AG04450 (cell line): ENCODE measurements at regions of chr13 and their contacts with region 1.

Region 1: DNA sequence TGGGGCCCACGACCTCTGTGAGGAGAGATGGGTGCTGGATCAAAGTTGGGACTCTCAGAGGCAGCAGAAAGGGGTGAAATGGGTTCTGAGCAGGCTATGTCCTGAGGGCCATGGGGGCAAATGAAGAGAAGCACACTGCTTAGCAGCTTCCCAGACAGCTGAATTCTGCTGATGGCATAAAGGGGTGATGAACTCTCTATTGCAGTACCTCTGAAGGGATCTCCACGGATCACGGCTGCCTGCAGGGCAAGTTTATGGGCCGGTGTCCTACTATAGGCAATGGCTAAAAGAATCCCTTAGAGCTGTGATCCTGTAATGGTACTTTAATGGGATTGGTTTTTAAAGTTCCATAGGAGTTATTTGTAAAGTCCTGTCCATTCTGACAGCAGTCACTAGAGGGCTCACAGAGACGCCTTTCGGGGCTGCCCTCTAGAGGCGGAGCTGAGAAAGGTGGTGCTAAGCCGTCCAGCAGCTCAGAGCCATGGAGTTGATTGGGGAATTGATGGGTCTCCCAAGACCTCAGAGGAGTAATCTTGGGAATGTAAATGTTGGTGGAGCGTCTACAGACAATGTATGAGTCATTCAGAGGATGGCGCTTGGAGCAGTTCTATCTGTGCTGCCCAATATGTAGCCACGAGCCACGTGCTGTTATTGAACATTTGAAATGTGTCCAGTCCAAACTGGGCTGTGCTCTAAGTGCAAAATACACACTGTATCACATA is 287.3 kb downstream of the COG6 start:
- DNase-seq: peak; percentile 33
- H3K4me3 ChIP-seq: no peak overlapping the region
- H3K27ac ChIP-seq: no peak overlapping the region
- H3K27me3 ChIP-seq: peaks cover 4% of the 10 kb centered on the region
- CTCF ChIP-seq: peak; percentile 100

Region 2: GRCh38 chr13:39684531-39685137 is 258.1 kb before region 1 on chr13:
- CTCF ChIA-PET with region 1: interaction called, 24 read pairs
- POLR2A ChIA-PET with region 1: no interaction called
- DNase-seq: no peak
- H3K4me3 ChIP-seq: no peak overlapping the region
- H3K27ac ChIP-seq: no peak overlapping the region
- H3K27me3 ChIP-seq: no peaks in the 10 kb centered on the region
- CTCF ChIP-seq: peak; percentile 34

Region 3: GRCh38 chr13:39955560-39955959 is 12.8 kb after region 1 on chr13:
- CTCF ChIA-PET with region 1: interaction called, 14 read pairs
- POLR2A ChIA-PET with region 1: no interaction called
- DNase-seq: no peak
- H3K4me3 ChIP-seq: no peak overlapping the region
- H3K27ac ChIP-seq: no peak overlapping the region
- H3K27me3 ChIP-seq: no peaks in the 10 kb centered on the region
- CTCF ChIP-seq: no peak

Region 4: GRCh38 chr13:40564342-40565001 is 621.8 kb after region 1 on chr13:
- CTCF ChIA-PET with region 1: no interaction called
- POLR2A ChIA-PET with region 1: no interaction called
- DNase-seq: no peak
- H3K4me3 ChIP-seq: no peak overlapping the region
- H3K27ac ChIP-seq: no peak overlapping the region
- H3K27me3 ChIP-seq: peaks cover 4% of the 10 kb centered on the region
- CTCF ChIP-seq: no peak